ENCODE measurements at regions of chr6 and their contacts with region 1.

Region 1: GRCh38 chr6:35688581-35689322 is at the start of gene FKBP5:
- DNase-seq: peak; percentile 98
- H3K4me3 ChIP-seq: peak within 1 kb of the TSS; percentile 97
- H3K27ac ChIP-seq: peak within 1 kb of the TSS; percentile 99
- H3K4me1 ChIP-seq: peaks cover 68% of the 10 kb centered on the region
- H3K27me3 ChIP-seq: no peaks in the 10 kb centered on the region
- CTCF ChIP-seq: no peak
- total RNA-seq, gene FKBP5: 101 TPM

Region 2: DNA sequence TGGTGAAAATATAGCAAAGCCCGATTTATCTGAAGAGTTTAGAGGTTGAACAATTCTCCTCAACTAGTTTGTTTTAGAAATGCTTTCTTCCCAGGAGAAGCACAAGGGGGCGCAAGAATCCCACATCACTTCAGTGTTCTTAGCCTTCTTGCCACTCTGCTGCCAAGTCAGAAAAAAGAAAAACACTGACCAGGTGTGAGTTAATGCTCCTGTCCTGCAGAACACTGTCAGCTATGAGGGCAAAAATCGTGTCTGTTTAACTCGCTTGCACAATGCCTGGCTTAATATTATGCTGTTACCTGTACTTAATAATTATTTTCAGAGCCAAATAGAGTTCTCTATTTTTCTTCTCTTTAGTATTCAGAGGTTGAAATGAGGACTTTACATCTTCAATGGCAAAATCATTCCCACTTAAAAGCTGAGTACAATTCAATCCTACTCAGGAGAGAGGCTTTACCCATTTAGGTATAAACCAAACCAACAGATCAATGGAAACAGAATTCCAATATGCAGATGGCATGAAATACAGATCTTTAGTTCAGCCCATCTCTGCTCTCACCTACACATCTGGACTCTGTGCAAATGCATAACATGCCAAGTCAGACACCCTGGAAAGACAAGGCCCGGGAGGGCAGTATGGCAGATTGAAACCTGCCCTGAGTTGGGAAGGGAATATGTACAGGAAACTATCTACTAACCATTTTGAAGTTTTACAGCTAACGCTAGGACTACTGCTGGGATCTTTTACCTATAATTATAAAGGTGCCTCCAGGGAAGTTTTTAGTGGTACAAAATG is 104.7 kb before region 1 on chr6:
- intact Hi-C with region 1: loop called (anchors 5 kb)
- DNase-seq: no peak
- H3K4me3 ChIP-seq: no peak overlapping the region
- H3K27ac ChIP-seq: peak overlapping the region; percentile 72
- H3K4me1 ChIP-seq: peaks cover 57% of the 10 kb centered on the region
- H3K27me3 ChIP-seq: no peaks in the 10 kb centered on the region
- CTCF ChIP-seq: peak; percentile 85

Region 3: GRCh38 chr6:35727935-35728682 is 39.4 kb after region 1 on chr6:
- intact Hi-C with region 1: loop called (anchors 2 kb)
- DNase-seq: peak; percentile 95
- H3K4me3 ChIP-seq: peak overlapping the region; percentile 69
- H3K27ac ChIP-seq: peak overlapping the region; percentile 100
- H3K4me1 ChIP-seq: peaks cover 90% of the 10 kb centered on the region
- H3K27me3 ChIP-seq: no peaks in the 10 kb centered on the region
- CTCF ChIP-seq: no peak

Measured in left ventricle myocardium inferior (tissue), 1 donor.